ENCODE measurements at regions of chr20 and their contacts with region 1.

Region 1: GRCh38 chr20:51404298-51405060 is 138.0 kb downstream of the NFATC2 start:
- DNase-seq: peak; percentile 93
- ATAC-seq: peak; percentile 80
- H3K4me3 Mint-ChIP-seq: peak overlapping the region; percentile 5
- H3K27ac Mint-ChIP-seq: peak overlapping the region; percentile 99
- H3K4me1 Mint-ChIP-seq: peaks cover 87% of the 10 kb centered on the region
- H3K27me3 Mint-ChIP-seq: no peaks in the 10 kb centered on the region
- CTCF ChIP-seq: no peak

Region 2: DNA sequence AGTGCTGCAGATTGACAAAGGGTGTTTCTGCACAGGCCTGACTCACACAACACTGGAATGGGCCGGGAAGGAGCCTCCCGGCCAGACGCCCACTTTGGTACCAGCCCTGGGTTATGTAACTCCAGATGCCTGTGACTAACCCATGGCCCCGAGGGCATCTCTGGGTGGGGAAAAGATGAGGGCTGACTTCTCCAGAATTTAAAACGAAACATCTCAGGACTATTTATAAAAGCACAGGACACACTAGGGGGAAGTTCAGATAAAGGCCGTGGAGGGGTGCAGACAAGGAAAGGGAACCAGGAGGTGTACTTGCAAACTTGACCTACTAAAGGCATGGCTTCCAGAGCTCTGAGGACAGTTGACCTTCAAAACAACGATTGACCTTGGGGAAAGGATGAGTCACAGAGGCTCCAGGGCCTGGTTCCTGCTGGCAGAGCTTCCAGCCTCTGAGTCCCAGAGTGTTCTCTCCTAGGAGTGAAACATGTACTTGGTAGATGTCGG is 58.8 kb before region 1 on chr20:
- CTCF ChIA-PET with region 1: no interaction called
- POLR2A ChIA-PET with region 1: no interaction called
- intact Hi-C with region 1: no loop called
- DNase-seq: no peak
- ATAC-seq: no peak
- H3K4me3 Mint-ChIP-seq: no peak overlapping the region
- H3K27ac Mint-ChIP-seq: no peak overlapping the region
- H3K4me1 Mint-ChIP-seq: no peaks in the 10 kb centered on the region
- H3K27me3 Mint-ChIP-seq: peaks cover 2% of the 10 kb centered on the region
- CTCF ChIP-seq: no peak

Region 3: GRCh38 chr20:51385646-51386530 is 18.6 kb before region 1 on chr20:
- CTCF ChIA-PET with region 1: interaction called, 8 read pairs
- POLR2A ChIA-PET with region 1: interaction called, 12 read pairs
- intact Hi-C with region 1: no loop called
- DNase-seq: peak; percentile 47
- ATAC-seq: no peak
- H3K4me3 Mint-ChIP-seq: no peak overlapping the region
- H3K27ac Mint-ChIP-seq: peak overlapping the region; percentile 21
- H3K4me1 Mint-ChIP-seq: peaks cover 68% of the 10 kb centered on the region
- H3K27me3 Mint-ChIP-seq: no peaks in the 10 kb centered on the region
- CTCF ChIP-seq: peak; percentile 66

Region 4: DNA sequence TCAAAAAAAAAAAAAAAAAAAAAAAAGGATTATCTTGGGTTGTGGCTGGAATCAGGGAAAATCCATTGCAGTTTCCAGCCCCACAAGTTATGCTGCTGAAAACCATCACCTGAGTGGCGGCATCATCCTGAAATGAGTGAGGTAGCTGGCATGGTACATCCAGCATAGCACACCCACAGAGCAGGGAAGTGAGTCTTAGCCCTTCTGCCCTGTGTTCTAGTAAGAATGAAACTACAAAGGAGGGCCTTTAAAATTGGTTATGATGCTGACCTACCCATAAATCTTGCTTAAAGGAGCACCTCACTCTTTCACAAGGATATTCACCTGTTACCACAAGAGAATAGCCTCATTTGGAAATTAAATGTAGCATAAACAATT is 18.8 kb after region 1 on chr20:
- CTCF ChIA-PET with region 1: interaction called, 4 read pairs
- POLR2A ChIA-PET with region 1: interaction called, 31 read pairs
- intact Hi-C with region 1: no loop called
- DNase-seq: peak; percentile 54
- ATAC-seq: peak; percentile 63
- H3K4me3 Mint-ChIP-seq: no peak overlapping the region
- H3K27ac Mint-ChIP-seq: peak overlapping the region; percentile 75
- H3K4me1 Mint-ChIP-seq: peaks cover 73% of the 10 kb centered on the region
- H3K27me3 Mint-ChIP-seq: no peaks in the 10 kb centered on the region
- CTCF ChIP-seq: no peak

Region 5: DNA sequence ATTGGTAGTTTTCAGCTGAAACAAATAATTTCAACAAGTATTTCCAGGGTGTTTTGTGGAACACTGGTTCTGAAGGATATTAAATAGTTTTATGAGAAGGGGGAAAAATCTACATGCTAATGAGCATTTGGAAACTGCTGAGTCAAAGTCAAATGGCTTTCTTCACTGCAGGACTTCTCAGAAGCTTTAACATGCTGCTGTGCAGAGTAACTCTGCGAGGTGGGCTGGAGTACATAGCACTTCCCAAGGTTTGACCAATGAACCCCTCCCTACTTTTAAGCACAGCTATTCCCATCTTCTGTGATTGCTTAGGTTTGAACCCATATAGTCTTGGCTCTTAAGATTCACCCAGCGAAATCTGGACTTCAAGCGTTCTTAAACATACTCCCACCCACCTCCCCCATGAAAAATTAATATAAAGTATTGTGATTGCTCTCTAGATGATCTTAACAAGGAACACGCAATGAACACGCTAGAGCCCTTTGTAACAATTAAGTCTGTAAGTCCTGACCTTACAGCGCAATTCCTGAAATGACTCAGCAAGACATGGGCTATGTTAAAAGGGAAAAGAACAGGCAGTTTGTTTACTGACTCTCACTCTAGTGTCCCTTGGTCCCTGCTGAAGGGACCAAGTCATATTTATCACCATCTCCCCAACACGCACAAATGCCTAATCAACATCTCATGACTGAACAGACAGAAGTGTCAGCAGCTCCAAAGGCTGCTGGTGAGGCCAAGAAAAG is 32.9 kb after region 1 on chr20:
- CTCF ChIA-PET with region 1: no interaction called
- POLR2A ChIA-PET with region 1: no interaction called
- intact Hi-C with region 1: no loop called
- DNase-seq: no peak
- ATAC-seq: no peak
- H3K4me3 Mint-ChIP-seq: no peak overlapping the region
- H3K27ac Mint-ChIP-seq: peak overlapping the region; percentile 11
- H3K4me1 Mint-ChIP-seq: peaks cover 42% of the 10 kb centered on the region
- H3K27me3 Mint-ChIP-seq: no peaks in the 10 kb centered on the region
- CTCF ChIP-seq: no peak

Region 6: DNA sequence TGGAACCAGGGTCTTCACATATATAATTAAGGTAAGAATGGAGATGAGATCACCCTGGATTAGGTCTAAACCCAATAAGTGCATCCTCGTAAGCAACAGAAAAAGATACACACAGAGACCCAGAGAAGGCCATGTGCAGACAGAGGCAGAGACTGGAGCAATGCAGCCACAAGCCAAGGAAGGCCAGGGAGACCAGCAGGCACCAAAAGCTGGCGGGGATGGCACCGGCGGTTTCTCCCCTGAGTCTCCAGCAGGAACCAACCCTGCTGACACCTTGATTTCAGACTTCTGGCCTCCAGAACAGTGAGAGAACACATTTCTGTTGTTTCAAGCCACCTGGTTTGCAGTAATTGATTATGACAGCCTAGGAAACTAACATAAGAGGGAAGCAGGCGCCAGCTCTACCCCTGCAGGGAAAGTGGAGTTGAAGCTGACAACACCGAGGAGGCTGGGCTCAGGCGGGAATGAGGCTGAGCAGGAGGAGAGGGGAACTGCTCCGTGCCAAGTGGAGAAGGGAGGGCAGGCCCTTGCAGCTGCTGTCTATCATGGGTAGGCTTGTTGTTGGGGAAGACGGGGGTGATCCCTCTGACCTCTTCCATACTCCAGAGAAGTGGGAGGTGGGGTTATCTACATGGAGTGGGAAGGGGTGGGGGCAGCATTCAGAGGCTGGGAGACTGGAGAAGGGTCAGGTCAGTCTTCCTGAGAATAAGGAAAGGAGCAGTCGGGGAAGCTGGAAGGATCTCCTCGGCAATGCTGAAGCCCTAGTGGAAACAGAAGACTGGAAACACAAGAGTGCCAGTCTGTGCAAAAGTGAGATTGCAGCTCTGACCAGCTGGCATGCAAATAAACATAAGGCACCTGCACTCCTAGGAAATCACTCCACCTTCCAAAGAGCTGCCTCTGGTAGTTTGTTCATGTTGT is 65.4 kb after region 1 on chr20:
- CTCF ChIA-PET with region 1: interaction called, 3 read pairs
- POLR2A ChIA-PET with region 1: interaction called, 3 read pairs
- intact Hi-C with region 1: loop called (anchors 5 kb)
- DNase-seq: no peak
- ATAC-seq: no peak
- H3K4me3 Mint-ChIP-seq: no peak overlapping the region
- H3K27ac Mint-ChIP-seq: peak overlapping the region; percentile 94
- H3K4me1 Mint-ChIP-seq: peaks cover 52% of the 10 kb centered on the region
- H3K27me3 Mint-ChIP-seq: no peaks in the 10 kb centered on the region
- CTCF ChIP-seq: no peak

Measured in activated CD8-positive, alpha-beta T cell treated with anti-CD3 and anti-CD28 coated beads for 36 hours (primary cell).